Adrenal gland (tissue), 19 donors: ENCODE measurements at regions of chr20 and their contacts with region 1.

Region 1: GRCh38 chr20:56554869-56555268 is 21.8 kb downstream of the FAM209B start:
- DNase-seq: peak; percentile 71 to 87 (median 79)
- H3K4me3 ChIP-seq: peak overlapping the region in 1 of 4 donors; percentile 16
- H3K27ac ChIP-seq: peak overlapping the region in 3 of 5 donors; percentile 36 to 63 (median 52)
- H3K4me1 ChIP-seq: peaks cover 8 to 15% of the 10 kb centered on the region in 2 donors
- H3K27me3 ChIP-seq: no peaks in the 10 kb centered on the region
- CTCF ChIP-seq: peak in 4 of 6 experiments; percentile 26 to 44 (median 32)
- POLR2A ChIP-seq: no peak

Region 2: GRCh38 chr20:56358596-56359211 is 196.2 kb before region 1 on chr20 and contains the start of gene FAM210B:
- intact Hi-C with region 1: no loop called
- DNase-seq: peak; percentile 87 to 92 (median 90)
- H3K4me3 ChIP-seq: peak within 1 kb of the TSS; percentile 32 to 98 (median 62)
- H3K27ac ChIP-seq: peak within 1 kb of the TSS; percentile 66 to 95 (median 87)
- H3K4me1 ChIP-seq: peaks cover 22 to 45% of the 10 kb centered on the region in 2 donors
- H3K27me3 ChIP-seq: no peaks in the 10 kb centered on the region
- CTCF ChIP-seq: no peak
- POLR2A ChIP-seq: peak; percentile 43 to 62
- total RNA-seq, gene FAM210B: 90.0 to 207 (median 133) TPM

Region 3: GRCh38 chr20:56579287-56579710 is 24.4 kb after region 1 on chr20:
- intact Hi-C with region 1: loop called in 1 of 2 experiments (anchors 2 kb)
- DNase-seq: no peak
- H3K4me3 ChIP-seq: no peak overlapping the region
- H3K27ac ChIP-seq: no peak overlapping the region
- H3K4me1 ChIP-seq: peaks cover 4% of the 10 kb centered on the region in 2 donors
- H3K27me3 ChIP-seq: peaks cover 4% of the 10 kb centered on the region
- CTCF ChIP-seq: no peak
- POLR2A ChIP-seq: no peak

Region 4: GRCh38 chr20:56974499-56975236 is 419.8 kb after region 1 on chr20:
- intact Hi-C with region 1: loop called in 1 of 2 experiments (anchors 10 kb)
- DNase-seq: peak in 4 of 7 donors; percentile 26 to 55 (median 42)
- H3K4me3 ChIP-seq: no peak overlapping the region
- H3K27ac ChIP-seq: no peak overlapping the region
- H3K4me1 ChIP-seq: no peaks in the 10 kb centered on the region
- H3K27me3 ChIP-seq: peaks cover 26% of the 10 kb centered on the region
- CTCF ChIP-seq: peak; percentile 25 to 46 (median 30)
- POLR2A ChIP-seq: no peak